H1 (cell line): ENCODE measurements at regions of chr14 and their contacts with region 1.

Region 1: DNA sequence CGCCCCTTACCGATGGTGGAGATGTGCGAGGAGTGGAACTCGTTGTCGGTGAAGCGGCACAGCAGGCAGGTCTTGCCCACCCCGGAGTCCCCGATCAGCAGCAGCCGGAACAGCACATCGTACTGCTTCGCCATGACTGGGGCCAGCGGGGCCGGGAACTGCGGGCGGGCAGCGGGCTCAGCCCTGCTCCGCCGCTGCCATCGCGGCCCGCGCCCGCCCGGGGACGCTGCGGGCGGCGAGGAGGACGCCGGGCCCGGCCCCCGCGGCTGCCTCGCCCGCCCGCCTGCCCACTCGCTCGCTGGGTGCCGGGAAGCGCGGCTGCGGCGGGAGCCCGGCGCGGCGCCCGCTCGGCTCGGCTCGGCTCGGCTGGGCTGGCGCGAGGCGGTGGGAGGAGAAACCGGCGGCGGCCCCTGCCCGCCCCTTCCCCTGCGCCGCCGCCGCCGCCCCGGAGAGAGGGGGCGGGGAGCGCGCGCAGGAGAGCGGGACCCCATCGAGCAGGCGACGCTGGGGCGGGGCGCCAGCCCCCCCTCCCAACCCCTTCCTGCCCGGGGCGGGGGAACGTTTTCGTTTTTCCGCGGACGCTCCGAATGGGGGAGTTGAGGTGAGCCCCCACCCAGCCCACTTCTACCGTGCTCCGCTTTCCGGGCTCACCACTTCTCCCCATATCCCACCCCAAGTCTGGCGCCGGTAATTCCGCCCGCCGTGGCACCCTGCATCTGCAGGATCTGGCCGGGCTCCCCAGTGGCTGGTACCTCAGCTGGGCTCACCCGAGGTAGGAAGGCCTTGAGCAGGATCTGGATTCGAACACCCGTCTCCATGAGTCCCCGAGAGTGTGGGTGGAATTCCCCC is at the start of gene RAB15:
- DNase-seq: no peak
- H3K4me3 ChIP-seq: peak within 1 kb of the TSS; percentile 60 to 94 (median 72)
- H3K27ac ChIP-seq: no peak within 1 kb of the TSS
- H3K4me1 ChIP-seq: peaks cover 5 to 36% (median 18%) of the 10 kb centered on the region in 4 experiments
- H3K27me3 ChIP-seq: peaks cover 0 to 21% (median 8%) of the 10 kb centered on the region in 4 experiments; a peak in 4 of 7 replicates
- CTCF ChIP-seq: no peak
- EP300 ChIP-seq: no peak
- POLR2A ChIP-seq: no peak
- RAD21 ChIP-seq: no peak
- total RNA-seq, gene RAB15: 58.1 and 59.2 TPM in 2 replicates

Region 2: GRCh38 chr14:64986578-64987571 is 14.7 kb after region 1 on chr14 and contains the start of gene FNTB:
- CTCF ChIA-PET with region 1: interaction called, 15 read pairs
- POLR2A ChIA-PET with region 1: interaction called, 17 read pairs
- DNase-seq: peak; percentile 90 to 95
- H3K4me3 ChIP-seq: peak within 1 kb of the TSS; percentile 55 to 75 (median 74)
- H3K27ac ChIP-seq: peak within 1 kb of the TSS; percentile 42; the same call in 1 of the 2 replicates
- H3K4me1 ChIP-seq: peaks cover 0 to 2% (median 0%) of the 10 kb centered on the region in 4 experiments; a peak in 2 of 7 replicates
- H3K27me3 ChIP-seq: no peaks in the 10 kb centered on the region; a peak in 2 of 7 replicates
- CTCF ChIP-seq: peak; percentile 77 to 93 (median 85)
- EP300 ChIP-seq: no peak
- POLR2A ChIP-seq: peak in 1 of 2 experiments; percentile 69; a peak in 2 of 3 replicates
- RAD21 ChIP-seq: peak; percentile 84 to 87
- total RNA-seq, gene FNTB: 13.8 and 16.0 TPM in 2 replicates

Region 3: GRCh38 chr14:65195042-65195719 is 223.0 kb after region 1 on chr14:
- CTCF ChIA-PET with region 1: no interaction called
- POLR2A ChIA-PET with region 1: no interaction called
- DNase-seq: no peak
- H3K4me3 ChIP-seq: no peak overlapping the region
- H3K27ac ChIP-seq: no peak overlapping the region
- H3K4me1 ChIP-seq: no peaks in the 10 kb centered on the region
- H3K27me3 ChIP-seq: no peaks in the 10 kb centered on the region
- CTCF ChIP-seq: no peak
- EP300 ChIP-seq: no peak
- POLR2A ChIP-seq: no peak
- RAD21 ChIP-seq: no peak